Heart left ventricle (tissue), 16 donors: ENCODE measurements at regions of chr1 and their contacts with region 1.

Region 1: DNA sequence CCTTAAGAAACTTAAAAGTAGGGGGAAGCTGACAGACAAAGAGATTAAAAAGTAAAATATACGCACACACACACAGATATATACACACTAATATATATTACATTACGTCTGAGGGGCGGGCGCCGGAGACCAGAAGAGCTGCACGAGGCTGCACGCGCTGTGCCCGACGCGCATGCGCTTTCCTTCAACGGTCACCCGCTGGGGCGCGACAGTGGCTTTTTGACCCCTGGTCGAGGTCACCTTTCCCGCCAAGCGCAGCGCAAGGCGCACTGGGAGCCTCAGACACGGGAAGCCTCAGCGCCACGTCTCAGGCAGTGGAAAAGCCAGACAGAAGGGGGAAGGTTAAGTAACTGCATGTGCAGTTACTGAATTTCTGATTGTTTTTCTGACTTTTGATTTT is at the start of gene HORMAD1:
- DNase-seq: no peak
- ATAC-seq: no peak
- H3K4me3 ChIP-seq: peak within 1 kb of the TSS in 2 of 12 donors; percentile 19 to 23
- H3K27ac ChIP-seq: no peak within 1 kb of the TSS
- H3K4me1 ChIP-seq: no peaks in the 10 kb centered on the region
- H3K27me3 ChIP-seq: no peaks in the 10 kb centered on the region
- CTCF ChIP-seq: no peak
- POLR2A ChIP-seq: no peak
- total RNA-seq, gene HORMAD1: 0.25 to 0.45 TPM in 2 of 9 donors, not detected in the others

Region 2: DNA sequence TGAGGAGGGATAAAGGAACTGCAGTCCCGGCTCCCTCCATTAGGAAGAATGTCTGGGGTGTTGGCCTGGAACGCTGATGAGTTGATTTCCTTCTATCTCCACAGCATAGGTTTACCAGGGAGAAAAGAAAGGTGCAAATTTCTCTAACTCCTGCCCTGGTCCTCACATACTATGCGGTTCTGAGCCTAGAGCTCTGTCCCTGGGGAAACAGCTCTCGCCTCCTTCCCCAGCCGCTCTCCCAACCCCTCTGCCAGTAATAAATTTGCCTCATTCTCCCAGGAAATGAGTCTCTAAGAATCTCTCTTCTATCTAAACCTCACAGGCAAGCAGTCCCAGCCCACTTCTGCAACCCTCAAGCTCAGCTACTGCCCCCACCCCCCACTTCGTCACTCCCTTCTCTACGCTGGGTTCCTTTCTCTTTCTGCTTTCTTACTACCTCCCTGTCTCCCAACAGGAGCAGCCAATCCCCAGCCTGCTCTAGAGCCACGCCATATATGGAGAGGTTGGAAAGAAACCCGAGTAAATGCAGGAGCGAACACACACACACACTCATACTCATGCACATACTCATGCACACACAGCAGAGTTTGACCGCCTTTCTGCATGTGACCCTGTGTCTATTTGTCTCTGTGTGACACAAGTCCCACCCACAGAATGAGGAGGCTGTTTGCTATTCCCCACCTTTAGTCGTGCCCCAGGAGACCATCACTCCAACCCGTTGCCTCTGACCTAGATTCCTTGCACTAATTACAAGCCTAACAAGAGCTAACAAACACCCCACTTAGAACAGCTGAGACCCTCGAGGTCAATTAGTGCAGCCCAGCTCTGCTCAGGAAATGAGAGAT is 557.6 kb before region 1 on chr1:
- intact Hi-C with region 1: no loop called
- DNase-seq: peak; percentile 83 to 91 (median 89)
- ATAC-seq: peak; percentile 84 to 94 (median 92)
- H3K4me3 ChIP-seq: peak overlapping the region in 9 of 12 donors; percentile 24 to 55 (median 38)
- H3K27ac ChIP-seq: peak overlapping the region; percentile 43 to 98 (median 90)
- H3K4me1 ChIP-seq: peaks cover 0 to 82% (median 33%) of the 10 kb centered on the region in 12 donors
- H3K27me3 ChIP-seq: no peaks in the 10 kb centered on the region
- CTCF ChIP-seq: no peak
- POLR2A ChIP-seq: peak in 1 of 2 donors; percentile 70

Region 3: GRCh38 chr1:150772326-150772725 is 51.6 kb after region 1 on chr1:
- intact Hi-C with region 1: loop called in 1 of 10 experiments (anchors 5 kb)
- DNase-seq: no peak
- ATAC-seq: no peak
- H3K4me3 ChIP-seq: no peak overlapping the region
- H3K27ac ChIP-seq: no peak overlapping the region
- H3K4me1 ChIP-seq: peaks cover 0 to 6% (median 0%) of the 10 kb centered on the region in 12 donors
- H3K27me3 ChIP-seq: no peaks in the 10 kb centered on the region
- CTCF ChIP-seq: no peak
- POLR2A ChIP-seq: no peak